Mammary epithelial cell (primary cell): ENCODE measurements at regions of chr19 and their contacts with region 1.

Region 1: DNA sequence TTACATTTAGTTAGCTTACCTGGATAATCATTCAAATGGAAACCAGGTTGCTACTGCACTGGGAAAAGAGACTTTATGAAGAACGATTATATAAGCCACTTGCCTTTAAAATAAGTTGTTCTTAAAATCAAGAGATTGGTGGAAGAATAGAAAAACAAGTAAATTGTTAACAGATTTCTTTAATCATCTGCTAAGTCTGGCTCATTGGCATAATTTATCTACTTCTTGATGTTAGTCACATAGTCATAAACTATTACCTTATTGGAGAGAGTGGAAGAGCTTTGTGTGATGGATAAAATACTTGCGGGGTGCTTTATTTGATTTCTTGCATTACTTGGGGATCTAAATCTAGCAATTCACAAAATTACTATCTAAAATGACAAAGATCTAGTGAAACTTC is 6.8 kb downstream of the LSM14A start:
- DNase-seq: no peak
- H3K4me3 ChIP-seq: no peak overlapping the region
- H3K27ac ChIP-seq: no peak overlapping the region
- H3K4me1 ChIP-seq: peaks cover 17% of the 10 kb centered on the region
- H3K27me3 ChIP-seq: no peaks in the 10 kb centered on the region
- CTCF ChIP-seq: no peak

Region 2: DNA sequence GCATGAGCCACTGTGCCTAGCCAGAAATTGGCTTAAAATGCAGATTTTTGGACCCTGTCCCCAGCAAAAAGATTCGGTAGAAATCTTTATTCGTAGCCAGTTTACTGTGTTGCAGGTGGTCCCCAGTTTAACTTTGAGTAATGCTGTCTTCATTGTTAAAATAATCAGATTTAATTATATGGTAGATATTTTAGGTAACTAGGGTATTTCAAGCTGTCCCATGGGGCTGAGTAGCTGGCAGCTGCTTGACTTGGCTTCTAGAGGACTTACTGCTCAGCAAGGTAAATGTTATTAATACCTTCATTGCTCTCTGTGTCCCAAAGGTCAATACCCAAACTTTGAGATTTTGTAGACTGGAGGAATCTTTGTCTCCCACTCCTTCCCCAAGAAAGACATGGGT is 14.4 kb after region 1 on chr19:
- CTCF ChIA-PET with region 1: no interaction called
- dilution Hi-C with region 1: no loop called
- in situ Hi-C with region 1: no loop called
- intact Hi-C with region 1: loop called (anchors 1 kb)
- DNase-seq: no peak
- H3K4me3 ChIP-seq: no peak overlapping the region
- H3K27ac ChIP-seq: no peak overlapping the region
- H3K4me1 ChIP-seq: no peaks in the 10 kb centered on the region
- H3K27me3 ChIP-seq: no peaks in the 10 kb centered on the region
- CTCF ChIP-seq: no peak

Region 3: GRCh38 chr19:34282611-34283519 is 103.8 kb after region 1 on chr19:
- CTCF ChIA-PET with region 1: no interaction called
- dilution Hi-C with region 1: no loop called
- in situ Hi-C with region 1: no loop called
- intact Hi-C with region 1: no loop called
- DNase-seq: peak; percentile 49
- H3K4me3 ChIP-seq: no peak overlapping the region
- H3K27ac ChIP-seq: no peak overlapping the region
- H3K4me1 ChIP-seq: no peaks in the 10 kb centered on the region
- H3K27me3 ChIP-seq: no peaks in the 10 kb centered on the region
- CTCF ChIP-seq: no peak

Region 4: GRCh38 chr19:34336781-34337271 is 157.8 kb after region 1 on chr19:
- CTCF ChIA-PET with region 1: no interaction called
- dilution Hi-C with region 1: no loop called
- in situ Hi-C with region 1: no loop called
- intact Hi-C with region 1: no loop called
- DNase-seq: peak; percentile 16
- H3K4me3 ChIP-seq: no peak overlapping the region
- H3K27ac ChIP-seq: no peak overlapping the region
- H3K4me1 ChIP-seq: no peaks in the 10 kb centered on the region
- H3K27me3 ChIP-seq: no peaks in the 10 kb centered on the region
- CTCF ChIP-seq: peak; percentile 58 to 67